Ascending aorta (tissue), 2 donors: ENCODE measurements at regions of chr20 and their contacts with region 1.

Region 1: DNA sequence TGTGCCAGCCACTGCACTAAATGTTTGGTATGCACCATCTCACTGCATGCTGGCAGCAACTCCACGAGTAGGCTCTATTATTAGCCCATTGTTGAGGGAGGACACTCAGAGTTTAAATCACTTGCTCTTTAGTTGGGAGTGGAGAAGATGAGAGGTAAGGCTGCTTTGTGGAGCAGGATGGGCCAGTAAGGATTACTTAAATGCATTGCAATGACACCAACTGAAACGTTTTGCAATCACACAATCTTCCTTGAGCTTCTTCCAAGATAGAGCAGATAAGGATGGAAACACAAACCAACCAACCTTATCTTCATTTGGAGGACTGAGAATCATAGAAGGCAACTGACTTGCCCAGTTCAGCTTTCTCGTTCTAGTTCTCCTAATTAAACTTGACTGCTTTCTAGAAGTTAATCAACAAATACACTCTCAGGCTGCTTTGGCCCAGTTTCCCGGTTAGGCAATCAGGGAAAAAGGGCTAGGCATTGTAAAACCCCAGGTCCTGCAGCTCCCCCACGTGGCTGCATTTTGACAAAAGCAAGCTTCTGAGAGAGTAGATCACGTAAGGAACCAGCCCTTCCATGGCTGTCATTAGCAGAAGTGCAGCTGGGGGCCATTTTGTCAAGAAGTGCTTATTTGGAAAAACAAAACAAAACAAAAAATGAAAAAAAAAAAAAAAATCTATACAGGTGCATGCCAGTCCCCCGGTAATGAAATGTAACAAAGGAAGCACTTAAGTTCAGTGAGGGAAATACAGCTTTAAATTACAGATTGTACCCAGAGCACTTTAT is 130.6 kb downstream of the BCAS1 start:
- DNase-seq: peak; percentile 77 to 94
- H3K4me3 ChIP-seq: no peak overlapping the region
- H3K27ac ChIP-seq: peak overlapping the region; percentile 12 to 57
- H3K4me1 ChIP-seq: peaks cover 0 to 15% of the 10 kb centered on the region in 2 donors
- H3K27me3 ChIP-seq: no peaks in the 10 kb centered on the region
- CTCF ChIP-seq: peak; percentile 56 to 80 (median 74)

Region 2: DNA sequence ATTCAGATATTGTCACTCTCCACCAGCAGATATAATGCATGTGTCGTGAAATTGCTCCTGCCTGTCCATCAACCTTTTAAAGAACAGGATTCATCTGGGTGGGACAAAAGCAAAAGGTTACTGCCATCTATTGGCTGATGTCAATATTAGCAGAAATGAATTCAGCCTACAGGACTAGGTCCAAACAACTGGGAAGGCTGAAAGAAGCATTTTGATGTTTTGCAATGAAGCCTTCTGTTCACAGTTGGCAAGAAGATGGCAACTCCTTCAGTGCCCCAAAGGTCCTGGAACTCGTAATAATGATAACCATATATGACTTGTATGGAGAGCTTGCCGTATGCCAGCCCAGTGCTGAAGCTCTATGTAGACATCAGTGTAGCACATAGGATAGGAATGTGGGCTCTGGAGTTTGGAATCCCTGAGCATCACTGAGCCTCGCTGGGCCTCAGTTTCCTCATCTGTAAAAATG is 123.1 kb after region 1 on chr20:
- intact Hi-C with region 1: loop called (anchors 5 kb)
- DNase-seq: no peak
- H3K4me3 ChIP-seq: no peak overlapping the region
- H3K27ac ChIP-seq: no peak overlapping the region
- H3K4me1 ChIP-seq: no peaks in the 10 kb centered on the region
- H3K27me3 ChIP-seq: no peaks in the 10 kb centered on the region
- CTCF ChIP-seq: peak; percentile 34 to 75 (median 50)